Gastrocnemius medialis (tissue), 4 donors: ENCODE measurements at regions of chr9 and their contacts with region 1.

Region 1: GRCh38 chr9:19885608-19886007 is 96.8 kb upstream of the SLC24A2 start:
- DNase-seq: no peak
- ATAC-seq: no peak
- H3K4me3 ChIP-seq: no peak overlapping the region
- H3K27ac ChIP-seq: no peak overlapping the region
- H3K4me1 ChIP-seq: no peaks in the 10 kb centered on the region
- H3K27me3 ChIP-seq: no peaks in the 10 kb centered on the region
- CTCF ChIP-seq: no peak
- POLR2A ChIP-seq: no peak

Region 2: DNA sequence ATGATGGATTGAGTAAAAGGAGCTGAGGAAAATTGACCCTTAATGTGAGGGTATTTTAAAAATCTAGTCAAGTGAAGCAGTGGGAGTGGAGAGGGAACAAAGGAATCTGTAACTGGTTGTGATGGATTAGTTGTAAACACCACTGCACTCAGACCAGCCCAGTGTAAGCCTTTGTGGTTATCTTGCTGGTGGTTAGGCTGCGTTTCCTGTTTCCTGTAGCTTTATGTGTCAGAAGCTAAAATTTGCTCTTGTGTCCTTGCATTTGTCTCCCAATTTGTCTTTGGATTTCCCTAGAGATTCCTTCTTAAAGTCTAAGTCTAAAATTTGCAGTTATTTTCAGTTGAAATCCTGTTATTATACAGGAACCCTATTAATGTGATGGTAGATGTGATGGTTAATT is 1274.6 kb after region 1 on chr9:
- in situ Hi-C with region 1: no loop called
- intact Hi-C with region 1: loop called (anchors 5 kb)
- DNase-seq: no peak
- ATAC-seq: no peak
- H3K4me3 ChIP-seq: no peak overlapping the region
- H3K27ac ChIP-seq: no peak overlapping the region
- H3K4me1 ChIP-seq: no peaks in the 10 kb centered on the region
- H3K27me3 ChIP-seq: no peaks in the 10 kb centered on the region
- CTCF ChIP-seq: no peak
- POLR2A ChIP-seq: no peak